ENCODE measurements at regions of chr13 and their contacts with region 1.

Region 1: GRCh38 chr13:79775830-79776229 is 294.9 kb downstream of the NDFIP2 start:
- DNase-seq: peak; percentile 73
- ATAC-seq: peak; percentile 88
- H3K4me3 ChIP-seq: no peak overlapping the region
- H3K27ac ChIP-seq: peak overlapping the region; percentile 43
- H3K4me1 ChIP-seq: peaks cover 21% of the 10 kb centered on the region
- H3K27me3 ChIP-seq: no peaks in the 10 kb centered on the region
- CTCF ChIP-seq: peak; percentile 84

Region 2: GRCh38 chr13:79318664-79319063 is 457.2 kb before region 1 on chr13:
- CTCF ChIA-PET with region 1: no interaction called
- POLR2A ChIA-PET with region 1: no interaction called
- intact Hi-C with region 1: no loop called
- DNase-seq: no peak
- ATAC-seq: no peak
- H3K4me3 ChIP-seq: no peak overlapping the region
- H3K27ac ChIP-seq: no peak overlapping the region
- H3K4me1 ChIP-seq: no peaks in the 10 kb centered on the region
- H3K27me3 ChIP-seq: no peaks in the 10 kb centered on the region
- CTCF ChIP-seq: no peak

Region 3: GRCh38 chr13:79679334-79679733 is 96.5 kb before region 1 on chr13:
- CTCF ChIA-PET with region 1: no interaction called
- POLR2A ChIA-PET with region 1: no interaction called
- intact Hi-C with region 1: loop called (anchors 2 kb)
- DNase-seq: peak; percentile 76
- ATAC-seq: peak; percentile 66
- H3K4me3 ChIP-seq: no peak overlapping the region
- H3K27ac ChIP-seq: no peak overlapping the region
- H3K4me1 ChIP-seq: peaks cover 11% of the 10 kb centered on the region; the same call in 1 of the 2 replicates
- H3K27me3 ChIP-seq: no peaks in the 10 kb centered on the region
- CTCF ChIP-seq: peak; percentile 86

Region 4: DNA sequence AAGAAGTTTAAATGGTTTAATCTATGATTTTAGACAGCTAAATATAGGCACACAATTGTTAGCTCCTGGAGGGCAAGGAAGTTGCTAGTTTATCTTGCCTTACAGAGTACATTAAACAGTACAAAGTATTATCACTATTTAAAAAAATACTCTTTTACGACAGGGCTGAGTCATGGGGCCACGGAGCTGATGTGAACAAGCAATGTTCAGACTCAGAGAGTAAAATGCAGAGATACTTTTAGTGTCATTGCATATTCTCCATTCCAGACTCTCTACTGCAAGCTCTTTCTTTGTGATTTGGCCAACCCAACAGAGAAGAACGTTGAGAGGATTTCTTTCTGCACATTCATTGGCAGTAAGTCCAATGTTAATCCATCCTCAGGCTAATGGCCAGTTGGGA is 212.7 kb after region 1 on chr13:
- CTCF ChIA-PET with region 1: no interaction called
- POLR2A ChIA-PET with region 1: no interaction called
- intact Hi-C with region 1: loop called (anchors 1 kb)
- DNase-seq: peak; percentile 69
- ATAC-seq: peak; percentile 56
- H3K4me3 ChIP-seq: peak overlapping the region; percentile 42; the same call in 1 of the 2 replicates
- H3K27ac ChIP-seq: peak overlapping the region; percentile 100
- H3K4me1 ChIP-seq: peaks cover 43% of the 10 kb centered on the region
- H3K27me3 ChIP-seq: no peaks in the 10 kb centered on the region
- CTCF ChIP-seq: no peak

Region 5: DNA sequence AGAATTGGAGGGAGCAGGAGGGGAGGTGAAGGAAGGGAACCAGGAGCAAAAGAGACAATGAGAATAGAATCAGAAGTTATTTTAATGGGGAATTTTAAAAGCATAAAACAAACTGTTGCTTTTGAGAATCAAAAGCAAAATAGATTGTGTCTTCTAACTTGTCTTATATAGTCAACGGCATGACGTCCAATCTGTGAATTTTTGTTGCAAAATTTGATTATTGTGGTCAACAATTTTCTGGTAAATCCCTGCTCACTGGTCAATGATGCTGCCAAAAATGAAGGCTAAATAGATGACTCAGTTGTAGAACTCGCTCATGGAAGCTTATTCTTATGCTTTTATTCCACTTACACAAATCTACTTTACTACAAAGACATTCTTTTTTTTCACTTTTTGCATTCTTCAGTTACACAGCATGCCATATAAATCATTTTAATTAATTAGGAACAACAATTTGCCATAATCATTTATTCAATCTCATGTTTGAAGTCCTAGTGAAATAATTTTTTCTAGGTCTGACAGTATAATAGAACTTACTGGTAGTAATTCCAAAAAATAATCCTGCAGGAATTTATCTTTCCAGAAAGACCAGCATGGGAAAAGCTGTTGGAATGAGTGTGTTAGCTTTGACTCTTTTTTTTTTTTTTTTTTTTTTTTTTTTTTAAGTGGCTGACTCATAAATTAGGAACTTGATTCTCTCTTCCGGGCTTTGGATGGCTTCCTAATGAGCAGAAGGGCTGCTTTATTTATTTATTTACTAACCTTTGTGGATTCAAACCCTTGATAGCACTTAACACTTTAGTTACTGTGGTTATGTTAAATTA is 308.2 kb after region 1 on chr13:
- CTCF ChIA-PET with region 1: no interaction called
- POLR2A ChIA-PET with region 1: no interaction called
- intact Hi-C with region 1: loop called (anchors 2 kb)
- DNase-seq: peak; percentile 64
- ATAC-seq: no peak
- H3K4me3 ChIP-seq: no peak overlapping the region
- H3K27ac ChIP-seq: peak overlapping the region; percentile 98
- H3K4me1 ChIP-seq: peaks cover 59% of the 10 kb centered on the region
- H3K27me3 ChIP-seq: no peaks in the 10 kb centered on the region
- CTCF ChIP-seq: no peak

Region 6: DNA sequence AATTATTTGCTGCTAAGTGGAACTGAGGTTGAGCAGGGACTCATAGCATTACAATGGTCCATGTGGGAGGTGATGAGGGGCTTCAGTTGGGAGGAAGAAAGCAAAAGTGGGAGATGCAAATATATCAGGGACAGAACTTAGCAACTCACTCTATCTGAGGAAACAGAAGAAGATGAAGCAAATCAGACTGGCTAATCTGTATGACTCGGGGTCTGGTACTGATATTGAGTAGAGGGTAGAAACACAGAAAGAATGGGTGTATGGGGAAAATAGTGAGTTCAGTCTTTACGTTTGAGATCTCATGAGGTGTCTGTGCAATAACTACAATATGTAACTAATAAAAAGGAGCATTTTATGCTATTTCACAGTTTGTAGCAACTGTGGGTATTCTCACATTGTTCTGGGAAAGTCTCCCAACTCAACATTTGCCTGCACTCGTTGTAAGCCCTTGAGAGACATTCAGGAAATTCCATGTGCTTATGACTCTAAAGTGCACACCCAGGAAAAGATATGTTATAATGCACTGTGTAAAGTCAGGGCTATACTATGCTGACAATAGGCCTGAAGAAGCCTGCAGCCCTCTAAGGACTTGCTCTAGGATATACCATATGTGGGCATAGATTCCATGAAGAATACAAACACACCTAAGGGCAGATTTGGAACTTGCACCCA is 381.6 kb after region 1 on chr13:
- CTCF ChIA-PET with region 1: no interaction called
- POLR2A ChIA-PET with region 1: no interaction called
- intact Hi-C with region 1: no loop called
- DNase-seq: no peak
- ATAC-seq: no peak
- H3K4me3 ChIP-seq: no peak overlapping the region
- H3K27ac ChIP-seq: no peak overlapping the region
- H3K4me1 ChIP-seq: no peaks in the 10 kb centered on the region
- H3K27me3 ChIP-seq: no peaks in the 10 kb centered on the region
- CTCF ChIP-seq: no peak

Region 7: DNA sequence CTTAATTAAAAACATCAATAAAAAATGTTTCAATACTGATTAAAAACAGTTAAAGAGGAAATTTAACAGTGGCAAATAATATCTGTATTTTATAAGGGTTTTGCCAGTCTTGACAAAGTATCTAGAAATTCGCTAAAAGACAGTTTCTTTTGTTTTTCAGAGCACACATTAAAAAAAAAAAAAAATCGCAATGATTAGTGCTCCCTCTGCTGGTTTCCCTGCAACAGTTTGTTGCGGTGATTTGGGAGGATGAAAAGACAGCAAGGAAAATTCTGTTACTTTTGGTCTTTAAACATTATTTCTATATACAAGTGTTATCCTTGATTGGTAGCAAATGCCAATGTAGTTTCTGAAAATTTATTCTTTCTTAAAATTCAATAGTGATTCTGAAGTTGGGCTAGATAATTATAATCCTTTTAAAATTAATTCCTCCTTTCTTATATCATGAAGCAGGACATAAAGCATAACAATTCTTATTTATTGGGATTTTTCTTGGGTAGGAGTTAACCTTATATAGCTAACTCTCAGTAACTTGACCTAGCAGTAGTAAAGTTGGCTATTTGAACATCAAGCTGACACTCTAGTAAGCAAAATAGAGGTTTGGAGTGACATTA is 588.2 kb after region 1 on chr13:
- CTCF ChIA-PET with region 1: no interaction called
- POLR2A ChIA-PET with region 1: no interaction called
- intact Hi-C with region 1: loop called (anchors 5 kb)
- DNase-seq: peak; percentile 49
- ATAC-seq: no peak
- H3K4me3 ChIP-seq: 0 out of 2 replicates have a peak overlapping the region, but pooled peaks have one; percentile 23
- H3K27ac ChIP-seq: no peak overlapping the region
- H3K4me1 ChIP-seq: peaks cover 7% of the 10 kb centered on the region; the same call in 1 of the 2 replicates
- H3K27me3 ChIP-seq: no peaks in the 10 kb centered on the region
- CTCF ChIP-seq: peak; percentile 80